Caco-2 (cell line): ENCODE measurements at regions of chr16 and their contacts with region 1.

Region 1: GRCh38 chr16:77376358-77376757 is 58.5 kb downstream of the ADAMTS18 start:
- DNase-seq: no peak
- H3K4me3 ChIP-seq: no peak overlapping the region
- H3K4me3 Mint-ChIP-seq: no peak overlapping the region
- H3K27ac Mint-ChIP-seq: no peak overlapping the region
- H3K4me1 ChIP-seq: peaks cover 31% of the 10 kb centered on the region
- H3K4me1 Mint-ChIP-seq: peaks cover 29% of the 10 kb centered on the region
- H3K27me3 ChIP-seq: no peaks in the 10 kb centered on the region
- H3K27me3 Mint-ChIP-seq: no peaks in the 10 kb centered on the region
- CTCF ChIP-seq: peak in 1 of 2 experiments; percentile 18

Region 2: DNA sequence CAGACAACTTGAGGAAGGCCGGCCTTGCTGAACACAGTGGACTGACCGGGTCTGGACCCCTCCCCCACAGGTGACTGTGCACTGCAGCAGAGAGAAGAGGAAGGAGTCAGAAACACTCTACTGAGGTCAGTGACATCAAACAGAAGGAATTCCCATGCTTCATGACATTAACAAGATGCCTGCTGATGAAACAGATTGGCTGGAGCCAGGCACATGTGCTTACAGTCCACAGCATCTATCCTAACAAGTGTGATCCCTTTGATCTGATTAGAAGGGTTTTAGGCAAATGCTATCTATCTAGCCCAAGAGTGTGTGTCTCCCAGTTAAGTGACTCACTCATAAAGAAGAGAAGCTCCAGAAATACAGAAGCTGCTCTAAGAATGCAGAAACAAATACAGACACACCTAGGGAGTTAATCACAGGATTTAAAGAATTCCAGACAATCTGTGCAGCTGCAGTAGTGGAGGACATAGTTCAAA is 87.0 kb before region 1 on chr16:
- CTCF ChIA-PET with region 1: no interaction called
- POLR2A ChIA-PET with region 1: no interaction called
- intact Hi-C with region 1: loop called (anchors 1 kb)
- DNase-seq: peak; percentile 93 to 94
- H3K4me3 ChIP-seq: no peak overlapping the region
- H3K4me3 Mint-ChIP-seq: peak overlapping the region; percentile 70
- H3K27ac Mint-ChIP-seq: peak overlapping the region; percentile 97
- H3K4me1 ChIP-seq: peaks cover 40% of the 10 kb centered on the region
- H3K4me1 Mint-ChIP-seq: peaks cover 66% of the 10 kb centered on the region
- H3K27me3 ChIP-seq: no peaks in the 10 kb centered on the region
- H3K27me3 Mint-ChIP-seq: no peaks in the 10 kb centered on the region
- CTCF ChIP-seq: no peak

Region 3: DNA sequence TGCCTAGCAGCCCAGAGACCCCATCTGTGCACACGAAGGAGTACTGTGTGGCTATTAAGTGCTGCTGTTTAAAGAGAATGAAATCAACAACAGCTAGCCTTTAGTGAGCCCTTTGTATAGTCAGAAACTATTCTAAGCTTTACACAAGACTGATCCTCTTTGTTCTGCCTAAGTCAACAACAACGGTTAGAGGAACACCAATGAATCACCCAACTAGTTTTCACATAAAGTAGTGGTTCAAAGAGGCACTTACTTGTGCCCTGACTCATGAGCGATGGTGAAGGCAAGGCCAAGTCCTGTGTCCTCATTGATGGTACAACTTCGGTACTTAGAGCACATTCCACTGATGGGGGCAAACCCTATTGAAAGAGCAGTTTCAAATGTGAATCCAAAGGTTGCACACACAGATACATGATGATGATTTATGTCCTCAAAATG is 17.3 kb before region 1 on chr16:
- CTCF ChIA-PET with region 1: no interaction called
- POLR2A ChIA-PET with region 1: no interaction called
- intact Hi-C with region 1: loop called (anchors 1 kb)
- DNase-seq: peak in 1 of 2 experiments; percentile 53
- H3K4me3 ChIP-seq: no peak overlapping the region
- H3K4me3 Mint-ChIP-seq: peak overlapping the region; percentile 19
- H3K27ac Mint-ChIP-seq: no peak overlapping the region
- H3K4me1 ChIP-seq: peaks cover 30% of the 10 kb centered on the region
- H3K4me1 Mint-ChIP-seq: peaks cover 24% of the 10 kb centered on the region
- H3K27me3 ChIP-seq: no peaks in the 10 kb centered on the region
- H3K27me3 Mint-ChIP-seq: no peaks in the 10 kb centered on the region
- CTCF ChIP-seq: no peak

Region 4: DNA sequence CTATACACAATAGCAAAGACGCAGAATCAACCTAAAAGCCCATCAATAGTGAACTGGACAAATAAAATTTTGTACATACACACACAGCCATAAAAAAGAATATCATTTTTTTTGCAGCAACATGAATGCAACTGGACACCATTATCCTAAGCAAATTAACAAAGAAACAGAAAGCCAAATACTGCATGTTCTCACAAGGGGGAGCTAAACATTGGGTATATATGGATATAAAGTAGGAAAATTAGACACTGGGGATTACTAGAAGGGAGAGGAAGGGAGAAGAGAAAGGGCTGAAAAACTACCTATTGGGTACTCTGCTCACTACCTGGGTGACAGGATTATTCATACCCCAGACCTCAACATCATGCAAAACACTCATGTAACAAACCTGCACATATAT is 30.3 kb after region 1 on chr16:
- CTCF ChIA-PET with region 1: no interaction called
- POLR2A ChIA-PET with region 1: no interaction called
- intact Hi-C with region 1: loop called (anchors 1 kb)
- DNase-seq: no peak
- H3K4me3 ChIP-seq: no peak overlapping the region
- H3K4me3 Mint-ChIP-seq: no peak overlapping the region
- H3K27ac Mint-ChIP-seq: no peak overlapping the region
- H3K4me1 ChIP-seq: peaks cover 4% of the 10 kb centered on the region; the same call in 1 of the 2 replicates
- H3K4me1 Mint-ChIP-seq: no peaks in the 10 kb centered on the region
- H3K27me3 ChIP-seq: no peaks in the 10 kb centered on the region
- H3K27me3 Mint-ChIP-seq: no peaks in the 10 kb centered on the region
- CTCF ChIP-seq: peak in 1 of 2 experiments; percentile 1

Region 5: GRCh38 chr16:77584205-77584859 is 208.0 kb after region 1 on chr16:
- CTCF ChIA-PET with region 1: no interaction called
- POLR2A ChIA-PET with region 1: no interaction called
- intact Hi-C with region 1: loop called (anchors 1 kb)
- DNase-seq: peak; percentile 46 to 52
- H3K4me3 ChIP-seq: no peak overlapping the region
- H3K4me3 Mint-ChIP-seq: no peak overlapping the region
- H3K27ac Mint-ChIP-seq: no peak overlapping the region
- H3K4me1 ChIP-seq: no peaks in the 10 kb centered on the region
- H3K4me1 Mint-ChIP-seq: no peaks in the 10 kb centered on the region
- H3K27me3 ChIP-seq: no peaks in the 10 kb centered on the region
- H3K27me3 Mint-ChIP-seq: peaks cover 2% of the 10 kb centered on the region
- CTCF ChIP-seq: peak; percentile 87 to 91